ENCODE measurements at regions of chr3 and their contacts with region 1.

Region 1: DNA sequence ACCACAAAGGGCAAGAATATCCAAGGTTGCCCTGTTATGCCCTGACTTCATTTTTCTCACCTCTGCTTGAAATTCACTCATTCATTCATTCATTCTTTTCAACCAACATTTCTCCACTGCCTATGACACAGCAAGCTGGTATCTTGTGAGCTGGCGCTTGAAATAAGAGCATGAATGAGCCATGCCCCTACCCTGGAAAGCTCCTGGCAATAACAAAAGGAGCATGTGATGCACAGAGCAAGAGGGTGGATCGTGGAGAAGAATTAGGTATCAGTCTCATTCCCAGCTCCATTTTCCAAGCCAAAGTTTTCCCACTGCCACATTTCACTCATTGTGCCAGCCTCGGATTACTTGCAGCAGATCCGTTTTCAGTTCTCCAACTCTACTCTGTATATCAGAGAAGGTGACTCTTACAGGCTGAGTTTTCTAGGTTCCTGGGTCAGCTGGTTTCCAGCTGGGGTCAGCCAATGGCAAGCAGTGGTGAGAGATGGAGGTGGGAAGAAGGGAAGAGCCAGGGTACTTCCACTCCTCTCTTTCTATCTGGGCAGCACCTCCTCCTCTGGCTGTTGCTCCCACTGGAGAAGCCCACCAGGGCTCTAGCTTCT is 144.8 kb downstream of the SUCLG2 start:
- DNase-seq: no peak
- H3K4me3 ChIP-seq: no peak overlapping the region
- H3K27me3 ChIP-seq: no peaks in the 10 kb centered on the region
- CTCF ChIP-seq: no peak

Region 2: DNA sequence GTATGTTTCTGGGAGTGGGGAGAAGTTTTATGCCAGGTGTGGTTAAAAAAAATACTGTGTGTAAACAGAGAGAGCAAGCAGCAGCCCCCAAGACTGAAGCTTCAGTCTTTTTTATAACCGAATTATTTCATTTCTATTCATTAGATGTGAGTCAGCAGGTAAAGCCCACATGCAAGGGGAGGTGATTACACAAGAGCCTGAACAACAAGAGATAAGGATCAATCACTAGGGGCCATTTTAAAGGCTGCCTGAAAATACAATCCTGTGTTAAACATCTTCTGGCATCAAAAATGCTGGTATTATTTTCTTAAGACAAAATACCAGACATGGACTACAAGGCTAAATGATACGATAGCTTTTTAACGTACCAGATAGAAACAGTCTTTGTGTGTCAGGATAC is 72.5 kb before region 1 on chr3:
- CTCF ChIA-PET with region 1: no interaction called
- POLR2A ChIA-PET with region 1: no interaction called
- DNase-seq: no peak
- H3K4me3 ChIP-seq: no peak overlapping the region
- H3K27me3 ChIP-seq: no peaks in the 10 kb centered on the region
- CTCF ChIP-seq: no peak

Region 3: DNA sequence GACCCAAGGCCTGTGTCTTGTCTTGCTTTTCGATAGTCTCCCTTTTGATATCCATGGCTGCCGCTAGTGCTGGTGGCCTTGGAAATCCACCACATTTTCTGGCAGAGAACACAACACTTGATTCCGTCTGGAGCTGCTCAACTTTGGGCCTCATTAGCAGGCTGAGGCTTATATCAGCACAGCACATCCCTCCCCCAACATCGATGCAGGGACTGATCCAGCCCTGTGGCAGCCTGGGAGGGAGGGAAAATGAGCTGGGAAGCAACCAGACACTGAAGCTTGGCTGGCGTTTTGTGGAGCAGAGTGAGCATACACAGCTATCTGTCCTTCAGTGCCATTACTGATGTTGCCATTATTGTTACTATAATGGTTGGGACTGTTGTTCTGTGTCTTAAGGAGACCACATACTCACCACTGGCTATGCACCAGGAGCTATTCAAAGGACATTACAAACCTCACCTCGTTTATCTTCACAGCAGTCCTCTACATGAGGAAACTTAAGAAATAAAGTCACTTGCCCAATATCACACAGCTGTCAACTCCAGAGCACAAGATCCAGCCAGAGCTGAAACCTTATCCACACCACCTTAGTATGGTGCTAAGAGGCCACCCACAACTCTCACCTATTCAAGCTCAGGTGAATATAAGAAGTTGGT is 41.9 kb after region 1 on chr3:
- CTCF ChIA-PET with region 1: no interaction called
- POLR2A ChIA-PET with region 1: interaction called, 13 read pairs
- DNase-seq: no peak
- H3K4me3 ChIP-seq: no peak overlapping the region
- H3K27me3 ChIP-seq: no peaks in the 10 kb centered on the region
- CTCF ChIP-seq: no peak

Measured in BJ (cell line).